Panc1 (cell line): ENCODE measurements at regions of chr12 and their contacts with region 1.

Region 1: DNA sequence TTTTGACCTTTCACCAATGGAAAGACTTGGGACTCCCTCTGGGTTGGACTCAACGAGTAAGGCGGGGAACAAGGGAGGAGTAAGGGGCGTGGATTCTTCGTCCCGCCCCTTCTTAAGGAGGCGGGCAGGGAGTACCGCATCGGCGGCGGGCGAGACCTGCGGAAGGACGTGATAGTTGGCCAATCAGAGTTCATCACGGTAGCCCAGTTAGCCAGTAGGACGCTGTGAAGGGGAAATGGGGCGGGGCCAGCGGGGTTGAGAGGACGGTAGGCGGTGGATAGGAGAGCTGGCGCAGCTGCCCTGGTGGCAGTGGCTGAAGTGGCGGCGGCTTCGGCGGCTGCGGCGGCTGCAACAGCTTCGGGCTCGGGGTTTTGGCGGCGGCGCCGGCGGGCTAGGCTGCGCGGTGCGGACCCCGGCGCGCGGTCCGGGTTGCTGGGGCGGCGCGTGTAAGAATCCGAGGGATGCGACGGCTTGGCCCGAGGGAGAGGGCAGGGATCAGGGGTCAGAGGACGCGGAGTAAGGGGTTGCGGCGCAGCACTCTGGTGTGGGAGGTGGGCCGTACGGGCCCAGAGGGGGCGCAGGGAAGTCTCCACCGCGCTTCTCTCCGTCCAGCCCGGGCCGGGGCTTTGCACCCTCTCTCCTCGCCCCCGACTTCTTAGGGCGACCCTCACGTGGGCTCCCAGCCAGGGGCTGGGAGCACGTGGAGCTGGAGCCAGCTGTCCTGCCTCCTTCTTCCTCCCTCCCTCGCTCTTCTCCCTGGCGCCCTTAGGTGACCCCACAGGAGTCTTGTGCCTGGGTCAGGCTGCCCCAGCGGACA is at the start of gene TPCN1:
- DNase-seq: peak; percentile 99
- ATAC-seq: peak; percentile 93
- H3K4me3 ChIP-seq: peak within 1 kb of the TSS; percentile 80 to 81
- H3K27ac ChIP-seq: peak within 1 kb of the TSS; percentile 93
- H3K4me1 ChIP-seq: peaks cover 24% of the 10 kb centered on the region
- H3K27me3 ChIP-seq: no peaks in the 10 kb centered on the region
- CTCF ChIP-seq: no peak
- total RNA-seq, gene TPCN1: 75.2 TPM

Region 2: GRCh38 chr12:113103756-113104450 is 117.5 kb before region 1 on chr12:
- CTCF ChIA-PET with region 1: no interaction called
- POLR2A ChIA-PET with region 1: interaction called, 14 read pairs
- in situ Hi-C with region 1: no loop called
- intact Hi-C with region 1: no loop called
- DNase-seq: no peak
- ATAC-seq: no peak
- H3K4me3 ChIP-seq: no peak overlapping the region
- H3K27ac ChIP-seq: no peak overlapping the region
- H3K4me1 ChIP-seq: no peaks in the 10 kb centered on the region
- H3K27me3 ChIP-seq: no peaks in the 10 kb centered on the region
- CTCF ChIP-seq: no peak

Region 3: DNA sequence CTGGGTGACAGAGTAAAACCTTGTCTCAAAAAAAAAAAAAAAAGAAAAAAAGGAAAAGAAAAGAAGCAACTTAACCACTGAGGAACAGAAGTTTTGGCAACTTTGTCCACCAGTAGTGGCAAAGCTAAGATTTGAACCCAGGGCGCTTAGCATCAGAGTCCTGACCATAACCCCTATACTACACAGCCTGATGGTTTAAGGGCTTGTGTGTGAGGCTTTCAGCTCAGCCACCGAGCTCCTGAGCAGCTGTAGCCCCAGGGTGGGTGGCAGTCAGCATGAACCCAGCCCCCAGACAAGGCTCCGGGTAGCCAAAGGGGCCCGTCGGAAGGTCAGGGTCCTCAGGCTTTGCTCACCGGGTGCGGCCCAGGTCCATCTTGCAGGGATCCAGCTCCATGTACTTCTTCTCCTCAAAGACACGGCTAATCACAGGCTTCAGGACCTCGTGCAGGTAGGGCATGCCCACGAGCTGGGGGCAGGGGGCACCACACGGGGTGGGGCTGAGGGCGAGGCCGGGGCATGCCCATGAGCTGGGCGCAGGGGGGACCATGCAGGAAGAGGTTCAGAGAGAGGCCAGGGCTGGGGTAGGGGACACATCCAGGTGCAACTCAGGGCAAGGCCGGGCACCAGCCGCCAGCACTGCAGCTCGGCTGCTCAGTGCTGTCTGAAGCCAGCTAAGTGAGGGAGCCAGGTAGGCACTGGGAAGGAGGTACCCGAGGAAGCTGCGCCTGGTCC is 106.8 kb before region 1 on chr12:
- CTCF ChIA-PET with region 1: no interaction called
- POLR2A ChIA-PET with region 1: no interaction called
- in situ Hi-C with region 1: no loop called
- intact Hi-C with region 1: no loop called
- DNase-seq: no peak
- ATAC-seq: 0 out of 2 replicates have a peak, but pooled peaks have one; percentile 50
- H3K4me3 ChIP-seq: no peak overlapping the region
- H3K27ac ChIP-seq: no peak overlapping the region
- H3K4me1 ChIP-seq: no peaks in the 10 kb centered on the region
- H3K27me3 ChIP-seq: no peaks in the 10 kb centered on the region
- CTCF ChIP-seq: no peak

Region 4: GRCh38 chr12:113242560-113242959 is 21.2 kb after region 1 on chr12:
- CTCF ChIA-PET with region 1: interaction called, 4 read pairs
- POLR2A ChIA-PET with region 1: interaction called, 12 read pairs
- in situ Hi-C with region 1: no loop called
- intact Hi-C with region 1: no loop called
- DNase-seq: no peak
- ATAC-seq: 0 out of 2 replicates have a peak, but pooled peaks have one; percentile 1
- H3K4me3 ChIP-seq: no peak overlapping the region
- H3K27ac ChIP-seq: peak overlapping the region; percentile 86
- H3K4me1 ChIP-seq: peaks cover 71% of the 10 kb centered on the region
- H3K27me3 ChIP-seq: no peaks in the 10 kb centered on the region
- CTCF ChIP-seq: no peak

Region 5: GRCh38 chr12:113250045-113250444 is 28.7 kb after region 1 on chr12:
- CTCF ChIA-PET with region 1: no interaction called
- POLR2A ChIA-PET with region 1: interaction called, 12 read pairs
- in situ Hi-C with region 1: no loop called
- intact Hi-C with region 1: no loop called
- DNase-seq: no peak
- ATAC-seq: no peak
- H3K4me3 ChIP-seq: no peak overlapping the region
- H3K27ac ChIP-seq: no peak overlapping the region
- H3K4me1 ChIP-seq: peaks cover 18% of the 10 kb centered on the region
- H3K27me3 ChIP-seq: no peaks in the 10 kb centered on the region
- CTCF ChIP-seq: no peak